Aorta (tissue), 5 donors: ENCODE measurements at regions of chr6 and their contacts with region 1.

Region 1: DNA sequence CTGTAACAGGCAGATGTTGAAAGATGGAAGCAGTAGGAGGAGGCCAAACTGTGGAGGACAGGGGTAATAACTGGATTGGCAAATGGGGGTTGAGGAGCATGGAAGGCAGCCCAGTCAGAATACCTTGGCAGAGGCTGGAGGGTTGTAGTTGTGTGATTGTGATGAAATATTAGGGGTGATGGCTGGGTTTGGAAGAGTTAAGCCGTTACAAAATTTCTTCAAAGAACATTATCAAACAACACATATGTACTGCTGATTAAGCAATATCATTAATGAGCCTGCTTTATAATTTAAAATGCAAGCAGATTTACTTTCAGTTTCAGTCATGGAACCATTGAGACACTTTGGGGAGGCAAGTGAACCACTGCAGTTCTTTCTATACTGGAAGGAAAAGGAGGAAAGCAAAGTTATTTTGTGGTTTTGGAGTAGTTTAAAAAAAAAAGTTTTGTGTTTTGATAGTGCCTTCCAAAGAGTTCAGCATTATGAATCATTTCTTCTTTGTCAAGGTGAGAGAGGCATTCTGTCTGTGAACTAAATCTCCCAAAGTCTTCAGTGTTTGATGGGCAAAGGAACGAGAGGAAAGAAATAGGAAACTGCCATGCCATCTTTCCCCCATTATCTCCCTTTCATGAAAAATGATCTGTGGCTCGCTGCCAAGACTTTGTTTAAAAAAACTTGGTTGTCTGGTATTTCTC is 20.7 kb downstream of the FOXO3 start:
- DNase-seq: no peak
- ATAC-seq: peak; percentile 72
- H3K4me3 ChIP-seq: peak overlapping the region in 1 of 2 donors; percentile 14
- H3K27ac ChIP-seq: peak overlapping the region; percentile 67 to 79
- H3K4me1 ChIP-seq: peaks cover 17 to 48% of the 10 kb centered on the region in 2 donors
- H3K27me3 ChIP-seq: no peaks in the 10 kb centered on the region

Region 2: DNA sequence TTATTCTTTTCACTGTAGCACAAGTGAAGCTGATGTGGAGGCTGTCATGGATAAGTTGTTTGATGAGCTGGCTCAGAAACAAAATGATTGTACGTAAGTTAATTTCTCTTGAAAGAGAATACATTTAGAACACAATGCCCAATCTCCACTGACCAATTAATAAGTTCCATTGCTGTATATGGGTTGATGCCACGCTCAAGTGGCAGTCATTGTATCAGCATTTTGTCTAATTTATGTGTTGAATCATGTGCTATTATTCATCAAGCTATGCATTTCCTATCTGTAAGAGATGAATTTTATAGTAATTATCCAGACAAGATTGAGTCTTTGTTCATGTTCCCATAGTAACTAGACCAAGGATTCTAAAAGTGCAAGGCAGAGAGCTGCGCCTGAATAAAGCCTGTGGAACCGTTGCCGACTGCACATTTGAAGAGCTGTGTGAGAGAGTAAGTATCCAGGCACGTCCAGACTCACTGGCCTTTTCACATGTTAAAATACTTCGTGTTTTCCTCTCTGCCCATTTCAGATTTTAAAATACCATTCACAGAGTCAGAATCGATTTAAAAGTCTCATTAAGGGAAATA is 104.4 kb before region 1 on chr6:
- intact Hi-C with region 1: no loop called
- DNase-seq: no peak
- ATAC-seq: no peak
- H3K4me3 ChIP-seq: no peak overlapping the region
- H3K27ac ChIP-seq: no peak overlapping the region
- H3K4me1 ChIP-seq: no peaks in the 10 kb centered on the region
- H3K27me3 ChIP-seq: no peaks in the 10 kb centered on the region

Region 3: DNA sequence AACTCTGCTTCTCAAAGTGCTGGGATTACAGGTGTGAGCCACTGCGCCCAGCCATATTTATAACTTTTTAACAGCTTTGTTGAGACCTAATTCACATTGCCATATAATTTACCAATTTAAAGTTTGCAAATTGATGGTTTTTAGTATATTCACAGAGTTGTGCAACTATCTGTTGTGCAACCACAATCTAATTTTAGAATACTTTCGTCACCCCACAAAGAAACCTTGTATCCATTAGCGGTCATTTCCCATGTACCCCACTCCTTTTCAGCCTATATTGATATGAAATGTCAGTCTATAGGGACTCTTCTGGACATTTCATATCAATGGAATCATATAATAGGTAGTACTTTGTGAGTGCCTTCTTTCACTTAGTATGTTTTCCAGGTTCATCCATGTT is 35.2 kb after region 1 on chr6:
- intact Hi-C with region 1: loop called in 1 of 2 experiments (anchors 5 kb)
- DNase-seq: no peak
- ATAC-seq: no peak
- H3K4me3 ChIP-seq: no peak overlapping the region
- H3K27ac ChIP-seq: no peak overlapping the region
- H3K4me1 ChIP-seq: peaks cover 10 to 12% of the 10 kb centered on the region in 2 donors
- H3K27me3 ChIP-seq: no peaks in the 10 kb centered on the region

Region 4: GRCh38 chr6:108651340-108652227 is 70.2 kb after region 1 on chr6:
- intact Hi-C with region 1: loop called in 1 of 2 experiments (anchors 5 kb)
- DNase-seq: peak; percentile 66 to 79
- ATAC-seq: peak; percentile 62
- H3K4me3 ChIP-seq: no peak overlapping the region
- H3K27ac ChIP-seq: peak overlapping the region; percentile 86 to 98
- H3K4me1 ChIP-seq: peaks cover 7 to 48% of the 10 kb centered on the region in 2 donors
- H3K27me3 ChIP-seq: no peaks in the 10 kb centered on the region